ENCODE measurements at regions of chr19 and their contacts with region 1.

Region 1: GRCh38 chr19:10259162-10259905 is 7.3 kb downstream of the MRPL4 start:
- DNase-seq: peak; percentile 99
- ATAC-seq: peak; percentile 73
- H3K4me3 Mint-ChIP-seq: peak overlapping the region; percentile 53
- H3K27ac Mint-ChIP-seq: peak overlapping the region; percentile 90
- H3K4me1 Mint-ChIP-seq: peaks cover 26% of the 10 kb centered on the region
- H3K27me3 Mint-ChIP-seq: no peaks in the 10 kb centered on the region

Region 2: GRCh38 chr19:10230861-10231611 is 28.3 kb before region 1 on chr19 and contains the start of gene S1PR2:
- CTCF ChIA-PET with region 1: interaction called, 10 read pairs
- POLR2A ChIA-PET with region 1: no interaction called
- intact Hi-C with region 1: no loop called
- DNase-seq: peak; percentile 83
- ATAC-seq: peak; percentile 62
- H3K4me3 Mint-ChIP-seq: peak within 1 kb of the TSS; percentile 81
- H3K27ac Mint-ChIP-seq: peak within 1 kb of the TSS; percentile 84
- H3K4me1 Mint-ChIP-seq: peaks cover 24% of the 10 kb centered on the region
- H3K27me3 Mint-ChIP-seq: no peaks in the 10 kb centered on the region
- total RNA-seq, gene S1PR2: 8.1 to 9.0 TPM

Region 3: DNA sequence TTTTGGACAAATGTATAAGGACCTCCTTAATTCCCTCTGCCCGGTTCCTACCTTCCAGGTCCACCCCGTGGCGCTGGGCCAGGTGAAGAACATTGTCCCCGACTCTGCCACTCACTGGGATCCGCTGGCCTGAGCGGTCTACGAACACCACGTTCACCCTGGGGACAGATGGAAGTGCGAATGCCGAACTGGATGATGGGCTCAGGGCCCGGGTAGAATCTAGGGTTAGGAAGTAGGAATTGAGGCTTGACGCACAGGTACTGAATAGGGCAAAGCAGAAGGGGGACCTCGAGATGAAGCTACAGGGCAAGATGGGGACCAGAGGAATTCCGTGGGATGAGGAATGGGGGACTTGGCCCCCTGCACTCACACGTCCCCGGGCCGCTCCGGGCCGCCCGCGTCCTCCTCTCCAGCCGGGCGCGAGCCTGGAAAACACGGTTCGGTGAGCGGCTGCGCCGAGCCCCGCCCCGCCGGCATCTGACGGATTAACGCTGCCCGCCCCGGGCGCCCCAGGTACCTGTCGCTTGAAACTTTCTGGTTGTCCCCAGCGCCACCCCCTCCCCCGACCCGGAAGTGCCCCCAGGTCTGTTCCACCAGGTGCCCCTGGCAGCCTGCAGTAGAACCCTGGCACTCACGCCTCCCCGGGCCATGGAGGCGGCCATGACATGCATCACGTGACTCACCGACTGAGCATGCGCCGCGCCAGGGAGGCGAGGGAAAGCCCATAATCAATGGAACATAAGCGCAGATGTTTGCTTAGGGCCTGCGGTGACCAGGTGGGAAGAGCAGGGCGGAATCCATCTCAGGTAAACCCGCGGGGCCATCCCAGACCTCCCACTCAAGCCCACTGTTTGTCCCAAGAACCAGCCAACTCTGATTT is 56.2 kb after region 1 on chr19 and contains the start of gene FDX2:
- CTCF ChIA-PET with region 1: no interaction called
- POLR2A ChIA-PET with region 1: no interaction called
- intact Hi-C with region 1: loop called in 1 of 2 experiments (anchors 2 kb)
- DNase-seq: peak; percentile 95
- ATAC-seq: peak; percentile 94
- H3K4me3 Mint-ChIP-seq: peak within 1 kb of the TSS; percentile 89
- H3K27ac Mint-ChIP-seq: peak within 1 kb of the TSS; percentile 80
- H3K4me1 Mint-ChIP-seq: peaks cover 16% of the 10 kb centered on the region
- H3K27me3 Mint-ChIP-seq: no peaks in the 10 kb centered on the region
- total RNA-seq, gene FDX2: 11.7 to 13.3 TPM

Region 4: GRCh38 chr19:10380313-10381102 is 121.2 kb after region 1 on chr19 and contains the start of gene TYK2:
- CTCF ChIA-PET with region 1: interaction called, 165 read pairs
- POLR2A ChIA-PET with region 1: interaction called, 4 read pairs
- intact Hi-C with region 1: loop called (anchors 2 kb)
- DNase-seq: peak; percentile 97
- ATAC-seq: peak; percentile 99
- H3K4me3 Mint-ChIP-seq: peak within 1 kb of the TSS; percentile 86
- H3K27ac Mint-ChIP-seq: peak within 1 kb of the TSS; percentile 96
- H3K4me1 Mint-ChIP-seq: peaks cover 22% of the 10 kb centered on the region
- H3K27me3 Mint-ChIP-seq: no peaks in the 10 kb centered on the region
- total RNA-seq, gene TYK2: 151 to 197 TPM

Region 5: GRCh38 chr19:10388957-10389356 is 129.6 kb after region 1 on chr19:
- CTCF ChIA-PET with region 1: interaction called, 165 read pairs
- POLR2A ChIA-PET with region 1: interaction called, 6 read pairs
- intact Hi-C with region 1: loop called (anchors 1 kb)
- DNase-seq: peak; percentile 89
- ATAC-seq: peak; percentile 57
- H3K4me3 Mint-ChIP-seq: no peak overlapping the region
- H3K27ac Mint-ChIP-seq: no peak overlapping the region
- H3K4me1 Mint-ChIP-seq: no peaks in the 10 kb centered on the region
- H3K27me3 Mint-ChIP-seq: no peaks in the 10 kb centered on the region

Region 6: DNA sequence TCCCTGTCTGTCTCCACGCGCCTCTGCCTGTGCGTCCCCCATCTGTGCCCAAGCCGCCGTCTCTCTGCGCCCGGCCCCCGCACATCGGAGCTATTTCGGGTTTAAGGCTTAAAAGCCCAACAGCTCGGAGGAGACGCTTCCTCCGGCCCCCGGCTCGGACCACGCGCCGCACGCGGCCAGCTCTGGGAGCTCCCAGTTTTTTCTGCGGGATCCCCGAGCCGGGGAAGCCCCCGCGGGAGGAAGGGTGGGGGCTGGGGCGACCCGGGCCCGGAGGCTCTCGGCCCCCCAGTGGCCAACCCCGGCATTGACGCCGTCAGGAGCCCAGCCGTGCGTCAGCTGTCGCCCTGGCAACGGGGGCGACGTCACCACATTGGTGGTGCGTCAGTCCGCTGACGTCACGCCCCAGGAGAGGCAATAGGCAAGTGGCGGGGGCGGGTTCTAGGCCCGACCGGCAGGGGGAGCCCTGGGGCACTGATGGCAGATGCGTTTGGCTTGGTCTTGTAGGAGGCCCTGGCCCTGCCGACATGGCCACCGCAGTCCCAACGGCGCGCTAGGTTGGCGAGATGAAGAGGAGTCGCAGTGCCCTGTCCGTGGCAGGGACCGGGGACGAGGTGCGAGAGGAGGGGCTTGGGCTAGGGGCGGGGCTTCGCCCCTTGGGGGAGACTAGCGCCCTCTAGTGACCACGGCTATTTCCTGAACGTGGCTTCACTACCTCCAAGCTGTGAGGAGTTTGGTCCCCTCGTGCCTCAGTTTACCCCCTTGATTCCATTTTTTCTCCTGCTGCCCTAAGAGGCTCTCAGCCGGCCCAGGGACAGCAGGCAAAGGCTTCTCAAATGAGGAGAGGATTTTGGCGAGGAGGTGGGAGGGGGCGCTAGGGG is 157.3 kb after region 1 on chr19:
- CTCF ChIA-PET with region 1: interaction called, 14 read pairs
- POLR2A ChIA-PET with region 1: no interaction called
- intact Hi-C with region 1: no loop called
- DNase-seq: peak; percentile 98
- ATAC-seq: peak; percentile 61
- H3K4me3 Mint-ChIP-seq: peak overlapping the region; percentile 59
- H3K27ac Mint-ChIP-seq: peak overlapping the region; percentile 45
- H3K4me1 Mint-ChIP-seq: peaks cover 51% of the 10 kb centered on the region
- H3K27me3 Mint-ChIP-seq: peaks cover 36% of the 10 kb centered on the region

Measured in activated CD4-positive, alpha-beta T cell treated with anti-CD3 and anti-CD28 coated beads for 36 hours (primary cell).